Tibial artery (tissue), 4 donors: ENCODE measurements at regions of chr7 and their contacts with region 1.

Region 1: DNA sequence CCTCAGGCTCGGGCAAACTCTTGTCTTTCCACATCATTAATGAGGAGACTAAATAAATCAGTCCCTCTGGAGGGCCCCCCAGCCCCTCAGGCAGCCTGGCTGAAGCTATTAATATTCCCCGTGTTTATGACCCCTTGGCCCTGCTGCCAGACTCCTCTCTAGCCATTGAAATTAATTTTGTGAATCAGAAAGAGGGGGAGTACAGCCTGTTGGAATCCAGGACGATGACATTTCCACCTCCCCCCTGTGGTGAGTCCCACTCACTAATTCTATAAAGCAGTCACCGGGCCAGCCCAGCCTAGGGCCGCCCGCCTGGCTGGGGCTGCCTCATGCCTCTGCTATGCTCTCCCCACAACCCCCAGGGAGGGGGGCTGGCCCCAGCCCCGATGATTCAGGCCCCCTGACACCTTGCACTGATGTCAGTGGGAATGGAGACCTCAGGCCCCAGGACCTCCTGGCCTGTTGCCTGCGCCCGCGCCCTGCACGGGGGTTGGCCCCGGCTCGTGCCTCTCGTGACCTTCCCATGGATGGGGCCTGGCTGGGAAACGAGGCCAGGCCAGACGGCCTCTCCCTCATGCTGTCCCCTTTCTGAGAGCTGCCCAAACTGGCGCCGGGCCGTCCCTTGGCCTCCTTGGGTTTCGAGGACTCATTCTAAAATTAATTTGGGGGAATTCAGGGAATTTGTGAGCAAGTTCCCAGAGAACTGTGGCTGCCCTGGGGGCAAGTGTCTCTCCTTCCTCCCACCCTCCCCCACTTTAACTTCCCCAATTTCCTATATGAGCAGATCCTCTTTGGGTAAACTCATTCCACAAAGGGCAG is 34.0 kb downstream of the TMEM270 start:
- DNase-seq: peak; percentile 95 to 99
- H3K4me3 ChIP-seq: no peak overlapping the region
- H3K27ac ChIP-seq: peak overlapping the region; percentile 89 to 93
- H3K4me1 ChIP-seq: peaks cover 6 to 97% (median 60%) of the 10 kb centered on the region in 4 donors
- H3K27me3 ChIP-seq: no peaks in the 10 kb centered on the region
- CTCF ChIP-seq: peak; percentile 25 to 46

Region 2: GRCh38 chr7:73999615-74000420 is 104.9 kb after region 1 on chr7:
- intact Hi-C with region 1: loop called (anchors 10 kb)
- DNase-seq: peak; percentile 93 to 98
- H3K4me3 ChIP-seq: no peak overlapping the region
- H3K27ac ChIP-seq: peak overlapping the region; percentile 86 to 94
- H3K4me1 ChIP-seq: peaks cover 0 to 89% (median 59%) of the 10 kb centered on the region in 4 donors
- H3K27me3 ChIP-seq: no peaks in the 10 kb centered on the region
- CTCF ChIP-seq: peak in 1 of 2 experiments; percentile 6

Region 3: DNA sequence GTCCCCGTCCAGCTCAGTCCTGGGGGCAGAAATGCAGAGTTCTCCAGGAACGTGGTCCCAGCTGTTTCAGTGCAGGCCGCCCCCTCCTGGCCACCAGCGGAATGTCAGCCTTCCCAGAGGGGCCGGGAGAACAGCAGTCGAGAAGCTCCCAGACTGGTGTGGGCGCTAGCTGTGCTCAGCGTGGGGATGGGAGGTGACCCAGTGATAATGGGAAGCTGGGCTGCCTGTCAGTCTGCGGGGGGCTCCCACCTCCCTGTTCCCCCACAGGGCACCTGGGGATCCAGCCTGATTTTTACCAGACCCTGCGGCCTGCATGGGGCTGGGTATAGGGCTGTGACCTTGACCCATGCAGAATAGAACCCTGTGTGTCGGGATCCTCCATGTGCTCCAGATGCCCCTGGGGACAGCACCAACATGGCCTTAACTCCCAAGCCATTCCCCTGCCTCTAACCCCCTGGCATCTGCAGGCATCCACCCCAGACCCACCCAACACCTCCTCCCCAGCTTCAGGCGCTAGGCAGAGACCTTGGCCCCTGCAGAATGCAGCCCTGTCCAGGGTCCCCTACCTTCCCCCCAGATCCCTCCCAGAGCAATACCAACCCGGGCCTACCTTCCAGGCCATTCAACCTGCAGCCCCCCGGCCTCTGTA is 132.1 kb after region 1 on chr7:
- intact Hi-C with region 1: loop called (anchors 2 kb)
- DNase-seq: peak; percentile 92 to 94
- H3K4me3 ChIP-seq: peak overlapping the region; percentile 80 to 93
- H3K27ac ChIP-seq: peak overlapping the region; percentile 98
- H3K4me1 ChIP-seq: peaks cover 3 to 89% (median 67%) of the 10 kb centered on the region in 4 donors
- H3K27me3 ChIP-seq: no peaks in the 10 kb centered on the region
- CTCF ChIP-seq: peak; percentile 98 to 99